H1 (cell line): ENCODE measurements at regions of chr12 and their contacts with region 1.

Region 1: GRCh38 chr12:48890657-48891418 is 25.2 kb upstream of the RND1 start:
- DNase-seq: peak; percentile 51 to 96
- H3K4me3 ChIP-seq: peak overlapping the region; percentile 10 to 65 (median 22)
- H3K27ac ChIP-seq: no peak overlapping the region
- H3K4me1 ChIP-seq: 0 out of 7 replicates have a peak, but pooled peaks cover 0 to 6% (median 2%) of the 10 kb centered on the region in 4 experiments
- H3K27me3 ChIP-seq: no peaks in the 10 kb centered on the region; a peak in 2 of 7 replicates
- CTCF ChIP-seq: peak; percentile 86 to 95 (median 91)
- EP300 ChIP-seq: no peak
- POLR2A ChIP-seq: no peak
- RAD21 ChIP-seq: peak; percentile 90 to 96

Region 2: GRCh38 chr12:48865434-48866290 is 25.2 kb before region 1 on chr12 and contains the start of gene RND1:
- CTCF ChIA-PET with region 1: interaction called, 678 read pairs
- POLR2A ChIA-PET with region 1: interaction called, 651 read pairs
- DNase-seq: peak; percentile 91 to 94
- H3K4me3 ChIP-seq: peak within 1 kb of the TSS; percentile 66 to 90 (median 76)
- H3K27ac ChIP-seq: peak within 1 kb of the TSS; percentile 82
- H3K4me1 ChIP-seq: peaks cover 7 to 26% (median 18%) of the 10 kb centered on the region in 4 experiments
- H3K27me3 ChIP-seq: no peaks in the 10 kb centered on the region
- CTCF ChIP-seq: peak in 1 of 3 experiments; percentile 16; a peak in 1 of 4 replicates
- EP300 ChIP-seq: no peak
- POLR2A ChIP-seq: peak; percentile 100
- RAD21 ChIP-seq: no peak
- total RNA-seq, gene RND1: 15.8 and 16.2 TPM in 2 replicates

Region 3: GRCh38 chr12:48903982-48904411 is 13.2 kb after region 1 on chr12:
- CTCF ChIA-PET with region 1: interaction called, 79 read pairs
- POLR2A ChIA-PET with region 1: interaction called, 5 read pairs
- DNase-seq: peak in 1 of 2 experiments; percentile 95
- H3K4me3 ChIP-seq: peak overlapping the region; percentile 13 to 59 (median 53); a peak in 7 of 8 replicates
- H3K27ac ChIP-seq: no peak overlapping the region
- H3K4me1 ChIP-seq: 0 out of 7 replicates have a peak, but pooled peaks cover 0 to 2% (median 0%) of the 10 kb centered on the region in 4 experiments
- H3K27me3 ChIP-seq: no peaks in the 10 kb centered on the region
- CTCF ChIP-seq: peak; percentile 75 to 77 (median 76)
- EP300 ChIP-seq: no peak
- POLR2A ChIP-seq: no peak
- RAD21 ChIP-seq: peak in 1 of 2 experiments; percentile 35; a peak in 2 of 4 replicates

Region 4: DNA sequence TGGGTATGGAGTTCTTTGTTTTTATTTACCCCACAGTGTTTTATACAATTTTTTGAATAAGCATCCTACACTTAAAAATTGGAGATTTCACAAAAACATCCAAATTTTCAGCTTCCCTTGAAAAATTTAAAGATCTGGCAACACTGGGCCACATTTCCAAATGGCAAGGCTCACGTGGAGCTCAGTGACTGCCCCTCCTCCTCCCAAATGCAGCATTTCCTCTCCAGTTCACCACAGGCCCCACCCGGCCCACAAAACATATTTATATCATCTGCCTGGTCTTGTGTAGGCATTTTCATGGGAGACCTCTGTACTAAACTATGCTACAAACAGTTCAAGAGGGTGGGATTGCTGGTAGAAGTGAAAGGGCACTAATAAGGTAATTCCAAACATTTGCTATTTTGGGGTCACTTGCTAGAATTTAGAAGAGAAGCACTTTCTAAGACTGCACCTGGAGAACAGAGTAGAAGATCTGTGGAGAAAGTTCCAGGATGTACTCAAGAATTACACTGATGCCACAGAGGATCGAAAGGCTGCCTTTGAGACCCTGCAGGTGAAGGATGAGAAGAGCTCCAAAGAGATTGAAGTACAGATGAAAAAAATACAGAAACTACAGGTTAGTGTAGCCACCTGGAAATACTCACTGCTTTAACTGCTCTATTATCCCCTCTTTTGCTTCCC is 27.2 kb after region 1 on chr12:
- CTCF ChIA-PET with region 1: interaction called, 11 read pairs
- POLR2A ChIA-PET with region 1: no interaction called
- DNase-seq: no peak
- H3K4me3 ChIP-seq: no peak overlapping the region
- H3K27ac ChIP-seq: no peak overlapping the region
- H3K4me1 ChIP-seq: no peaks in the 10 kb centered on the region
- H3K27me3 ChIP-seq: no peaks in the 10 kb centered on the region
- CTCF ChIP-seq: no peak
- EP300 ChIP-seq: no peak
- POLR2A ChIP-seq: no peak
- RAD21 ChIP-seq: no peak

Region 5: DNA sequence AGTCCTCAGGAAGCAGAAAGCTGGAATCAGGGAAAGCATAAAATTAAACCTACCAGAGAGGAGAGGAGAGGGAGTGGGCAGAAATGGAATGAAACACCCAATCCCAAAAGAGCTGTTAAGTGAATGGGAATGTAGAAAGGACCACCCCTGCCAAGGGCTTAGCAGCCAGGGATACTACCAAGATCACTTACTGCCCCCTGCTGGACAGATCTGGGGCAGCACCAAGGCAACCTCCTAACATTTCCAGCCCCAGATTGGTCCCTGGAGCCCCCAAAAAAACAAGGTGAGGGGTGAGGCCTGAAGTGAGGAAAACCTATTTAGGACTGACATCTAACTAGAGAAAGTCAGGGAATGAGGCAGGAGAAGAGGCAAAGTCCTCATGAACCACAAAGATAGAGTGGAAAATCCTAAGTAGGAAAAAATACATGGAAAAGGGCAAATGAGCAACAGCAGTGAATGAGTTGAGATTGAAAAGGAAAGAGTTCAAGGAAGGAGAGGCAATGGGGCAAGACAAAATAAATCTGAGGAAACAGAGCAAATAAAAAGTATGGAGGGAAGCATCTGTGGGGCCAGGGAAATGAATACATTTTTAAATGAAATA is 45.6 kb after region 1 on chr12:
- CTCF ChIA-PET with region 1: interaction called, 25 read pairs
- POLR2A ChIA-PET with region 1: interaction called, 3 read pairs
- DNase-seq: peak; percentile 63 to 97
- H3K4me3 ChIP-seq: no peak overlapping the region
- H3K27ac ChIP-seq: no peak overlapping the region
- H3K4me1 ChIP-seq: no peaks in the 10 kb centered on the region
- H3K27me3 ChIP-seq: no peaks in the 10 kb centered on the region
- CTCF ChIP-seq: peak; percentile 84 to 97 (median 93)
- EP300 ChIP-seq: no peak
- POLR2A ChIP-seq: no peak
- RAD21 ChIP-seq: peak; percentile 67 to 72